ENCODE measurements at regions of chr3 and their contacts with region 1.

Region 1: DNA sequence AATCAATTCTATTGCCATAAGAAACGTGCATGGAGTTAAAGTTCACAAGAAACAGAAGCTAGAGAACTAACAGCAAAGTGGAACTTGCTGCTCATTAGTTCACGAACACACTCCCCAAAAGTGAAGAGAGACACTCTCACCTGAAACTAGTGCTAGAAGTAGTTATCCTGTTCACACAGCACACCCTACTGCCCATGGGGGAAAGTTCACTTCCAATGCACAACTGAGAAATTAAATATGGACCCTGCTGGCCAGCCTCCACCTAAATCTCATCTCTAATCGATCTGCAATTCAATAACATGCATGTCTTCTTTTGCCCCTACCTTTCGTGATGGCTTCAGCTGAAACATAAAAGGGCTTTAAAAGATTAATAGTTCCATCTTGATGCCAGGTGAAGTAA is 39.4 kb upstream of the FRMD4B start:
- DNase-seq: no peak
- ATAC-seq: peak; percentile 88
- H3K4me3 ChIP-seq: no peak overlapping the region
- H3K27ac ChIP-seq: no peak overlapping the region
- H3K4me1 ChIP-seq: peaks cover 7 to 16% of the 10 kb centered on the region in 2 donors
- H3K27me3 ChIP-seq: no peaks in the 10 kb centered on the region
- CTCF ChIP-seq: peak; percentile 37 to 52

Region 2: DNA sequence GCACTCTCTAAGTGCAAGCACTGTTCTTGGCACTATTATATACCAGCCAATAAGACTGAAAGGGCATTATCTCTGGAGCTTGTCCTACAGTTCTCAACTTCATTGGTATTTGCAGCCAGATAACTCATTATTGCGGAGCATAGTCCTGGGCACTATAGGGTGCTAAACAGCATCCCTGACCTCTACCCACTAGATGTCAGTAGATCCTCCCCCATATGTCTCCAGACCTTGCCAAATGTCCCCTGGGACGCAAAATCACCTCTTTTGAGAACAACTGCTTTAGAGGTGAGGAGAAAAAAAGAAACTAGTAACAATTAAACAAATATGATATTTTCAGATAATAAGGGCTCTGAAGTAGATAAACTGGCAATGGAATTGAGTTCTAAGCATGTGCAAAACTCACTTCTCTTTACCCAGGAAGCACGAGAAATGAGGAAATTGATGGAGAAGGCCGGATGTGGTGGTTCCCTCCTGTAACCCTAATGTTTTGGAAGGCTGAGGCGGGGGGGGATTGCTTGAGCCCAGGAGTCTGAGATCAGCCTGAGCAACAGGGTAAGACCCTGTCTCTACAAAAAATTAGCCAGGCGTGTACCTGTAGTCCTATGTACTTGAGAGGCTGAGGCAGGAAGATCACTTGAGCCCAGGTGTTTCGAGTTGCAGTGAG is 100.8 kb before region 1 on chr3:
- intact Hi-C with region 1: loop called in 1 of 2 experiments (anchors 10 kb)
- DNase-seq: no peak
- ATAC-seq: peak; percentile 16
- H3K4me3 ChIP-seq: no peak overlapping the region
- H3K27ac ChIP-seq: peak overlapping the region in 1 of 2 donors; percentile 16
- H3K4me1 ChIP-seq: peaks cover 57 to 88% of the 10 kb centered on the region in 2 donors
- H3K27me3 ChIP-seq: no peaks in the 10 kb centered on the region
- CTCF ChIP-seq: peak in 1 of 2 donors; percentile 38

Region 3: GRCh38 chr3:69368129-69368741 is 57.0 kb before region 1 on chr3:
- intact Hi-C with region 1: no loop called
- DNase-seq: no peak
- ATAC-seq: peak; percentile 15
- H3K4me3 ChIP-seq: no peak overlapping the region
- H3K27ac ChIP-seq: no peak overlapping the region
- H3K4me1 ChIP-seq: peaks cover 29 to 54% of the 10 kb centered on the region in 2 donors
- H3K27me3 ChIP-seq: no peaks in the 10 kb centered on the region
- CTCF ChIP-seq: no peak

Measured in left lung (tissue), 14 donors.